AG04449 (cell line): ENCODE measurements at regions of chr17 and their contacts with region 1.

Region 1: DNA sequence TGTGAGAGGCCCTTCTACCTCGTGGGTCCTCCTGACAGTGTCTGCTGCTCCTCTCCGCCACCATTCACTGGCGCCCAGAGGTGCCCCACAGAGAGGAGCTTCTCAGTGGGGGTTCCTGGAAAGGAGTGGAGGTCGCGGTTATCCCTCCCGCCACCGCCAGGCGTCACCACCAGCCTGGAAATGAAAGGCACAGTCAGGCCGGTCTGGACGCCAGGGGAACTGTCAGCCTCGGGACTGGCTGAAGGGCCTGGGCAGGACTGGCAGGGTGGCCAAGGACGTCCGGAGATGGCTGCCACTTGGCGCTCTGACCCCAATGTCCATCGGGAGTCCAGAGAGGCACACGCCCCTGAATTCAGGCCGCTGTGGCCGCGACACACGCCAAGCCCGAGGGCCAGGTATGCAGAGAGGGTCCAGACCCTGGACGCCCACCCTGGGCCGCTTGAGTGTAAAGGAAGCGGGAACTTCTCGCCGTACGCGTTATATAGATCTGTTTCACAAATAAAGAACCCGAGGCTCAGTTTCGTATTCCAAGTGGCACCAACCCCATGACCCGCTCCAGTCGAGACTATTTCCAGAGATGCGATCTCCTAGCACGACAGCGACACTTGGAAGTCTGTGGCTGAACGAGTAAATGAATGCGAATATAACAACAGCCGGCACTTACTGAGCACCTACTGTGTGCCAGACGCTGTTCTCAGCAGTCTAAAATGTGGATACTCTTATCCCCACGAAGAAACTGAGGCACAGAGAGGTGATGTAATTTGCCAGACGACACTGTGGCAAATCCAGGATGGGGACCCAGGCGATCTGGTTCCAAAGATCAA is 7.6 kb upstream of the NXPH3 start:
- DNase-seq: no peak
- H3K4me3 ChIP-seq: peak overlapping the region; percentile 54
- CTCF ChIP-seq: peak; percentile 96

Region 2: GRCh38 chr17:49585422-49586027 is 17.4 kb after region 1 on chr17:
- CTCF ChIA-PET with region 1: interaction called, 50 read pairs
- POLR2A ChIA-PET with region 1: no interaction called
- DNase-seq: no peak
- H3K4me3 ChIP-seq: no peak overlapping the region
- CTCF ChIP-seq: no peak

Region 3: DNA sequence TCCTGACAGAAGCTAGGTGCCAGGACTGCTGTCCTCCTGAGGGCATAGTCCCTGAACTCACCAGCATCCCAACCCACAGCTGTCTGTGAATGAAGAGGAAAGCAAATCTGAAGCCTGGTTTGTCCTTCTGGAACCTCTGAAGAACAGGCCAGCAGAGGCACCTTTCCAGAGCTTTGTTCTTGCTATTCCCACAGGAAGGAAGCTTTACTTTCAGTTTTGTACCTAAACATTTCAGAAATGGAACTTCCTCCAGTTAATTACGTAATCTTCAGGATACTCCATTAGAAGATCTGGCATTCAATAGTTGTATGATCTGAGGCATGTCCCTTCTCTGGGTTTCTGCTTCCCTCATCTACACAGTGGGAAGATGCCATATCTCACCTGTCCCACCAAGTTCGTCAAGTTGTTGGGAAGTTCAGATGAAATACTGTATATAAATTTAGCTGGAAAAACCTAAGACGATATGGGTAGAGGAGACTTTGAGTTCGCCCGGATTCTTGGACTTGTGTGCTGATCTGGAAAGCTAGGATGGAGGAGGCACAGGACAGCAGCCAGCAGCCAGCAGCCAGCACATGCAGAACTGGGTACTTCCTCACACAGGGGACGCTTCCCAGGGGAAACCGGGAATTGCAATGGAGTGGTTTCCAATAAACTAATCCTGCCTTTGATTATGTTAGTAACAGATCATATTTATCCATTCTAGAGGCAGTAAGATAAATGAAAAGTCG is 30.0 kb after region 1 on chr17:
- CTCF ChIA-PET with region 1: interaction called, 13 read pairs
- POLR2A ChIA-PET with region 1: no interaction called
- DNase-seq: no peak
- H3K4me3 ChIP-seq: no peak overlapping the region
- CTCF ChIP-seq: no peak

Region 4: DNA sequence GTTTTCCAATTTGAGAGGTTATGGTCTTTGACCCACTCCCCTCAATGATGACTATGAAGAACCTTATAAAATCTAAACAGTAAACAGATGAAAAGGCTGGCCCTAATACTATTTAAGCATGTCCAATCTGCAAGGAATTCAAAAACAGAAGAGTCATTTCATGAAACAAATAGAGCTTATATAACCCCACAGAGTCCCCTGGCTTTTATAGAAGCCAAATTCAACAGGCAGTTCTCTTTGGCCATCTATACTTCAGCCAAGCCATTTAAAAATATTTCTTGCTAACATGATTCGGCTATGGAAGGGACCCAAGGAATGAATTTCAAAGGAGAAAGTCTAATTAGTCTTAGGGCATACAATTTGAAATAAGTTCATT is 66.4 kb after region 1 on chr17:
- CTCF ChIA-PET with region 1: interaction called, 12 read pairs
- POLR2A ChIA-PET with region 1: no interaction called
- DNase-seq: no peak
- H3K4me3 ChIP-seq: no peak overlapping the region
- CTCF ChIP-seq: no peak

Region 5: DNA sequence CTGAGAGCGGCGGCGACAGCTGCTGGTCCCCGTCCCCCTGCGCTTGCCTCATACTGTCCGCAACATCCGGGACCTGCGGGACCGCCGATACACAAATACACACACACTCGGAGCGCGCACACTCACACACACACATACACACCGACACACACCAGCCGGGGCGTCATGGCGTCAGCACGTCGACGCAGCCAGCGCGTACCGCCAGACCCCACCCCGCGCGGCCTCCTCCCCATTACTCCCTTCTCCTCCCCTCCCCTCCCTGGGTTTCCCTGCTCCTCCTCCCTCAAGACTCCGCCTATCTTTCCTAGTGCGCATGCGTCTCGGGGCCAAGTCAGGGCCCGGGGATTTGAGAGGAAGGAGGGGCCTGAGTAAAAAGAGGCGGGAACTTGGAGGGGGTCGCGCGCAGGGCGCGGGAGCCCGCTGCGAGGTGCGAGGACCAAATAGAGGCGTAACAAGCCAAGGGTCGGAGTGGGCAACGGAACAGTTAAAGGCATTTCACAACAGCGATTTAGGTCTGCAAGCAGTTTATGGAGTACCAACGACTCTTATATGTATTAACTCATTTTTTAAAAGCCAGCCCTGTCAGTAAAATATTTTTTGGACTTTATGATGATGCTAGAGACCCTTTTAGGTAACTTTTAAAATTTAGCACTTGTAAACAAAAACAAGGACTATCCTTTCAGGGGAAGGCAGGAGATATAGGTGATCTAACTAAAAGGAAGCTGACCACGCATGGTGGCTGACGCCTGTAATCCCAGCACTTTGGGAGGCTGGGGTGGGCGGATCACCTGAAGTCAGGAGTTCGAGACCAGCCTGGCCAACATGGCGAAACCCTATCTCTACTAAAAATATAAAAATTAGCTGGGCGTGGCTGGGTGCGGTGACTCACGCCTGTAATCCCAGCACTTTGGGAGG is 110.1 kb after region 1 on chr17 and contains the start of gene SPOP:
- CTCF ChIA-PET with region 1: interaction called, 59 read pairs
- POLR2A ChIA-PET with region 1: no interaction called
- DNase-seq: peak; percentile 98
- H3K4me3 ChIP-seq: peak within 1 kb of the TSS; percentile 78
- CTCF ChIP-seq: no peak

Region 6: DNA sequence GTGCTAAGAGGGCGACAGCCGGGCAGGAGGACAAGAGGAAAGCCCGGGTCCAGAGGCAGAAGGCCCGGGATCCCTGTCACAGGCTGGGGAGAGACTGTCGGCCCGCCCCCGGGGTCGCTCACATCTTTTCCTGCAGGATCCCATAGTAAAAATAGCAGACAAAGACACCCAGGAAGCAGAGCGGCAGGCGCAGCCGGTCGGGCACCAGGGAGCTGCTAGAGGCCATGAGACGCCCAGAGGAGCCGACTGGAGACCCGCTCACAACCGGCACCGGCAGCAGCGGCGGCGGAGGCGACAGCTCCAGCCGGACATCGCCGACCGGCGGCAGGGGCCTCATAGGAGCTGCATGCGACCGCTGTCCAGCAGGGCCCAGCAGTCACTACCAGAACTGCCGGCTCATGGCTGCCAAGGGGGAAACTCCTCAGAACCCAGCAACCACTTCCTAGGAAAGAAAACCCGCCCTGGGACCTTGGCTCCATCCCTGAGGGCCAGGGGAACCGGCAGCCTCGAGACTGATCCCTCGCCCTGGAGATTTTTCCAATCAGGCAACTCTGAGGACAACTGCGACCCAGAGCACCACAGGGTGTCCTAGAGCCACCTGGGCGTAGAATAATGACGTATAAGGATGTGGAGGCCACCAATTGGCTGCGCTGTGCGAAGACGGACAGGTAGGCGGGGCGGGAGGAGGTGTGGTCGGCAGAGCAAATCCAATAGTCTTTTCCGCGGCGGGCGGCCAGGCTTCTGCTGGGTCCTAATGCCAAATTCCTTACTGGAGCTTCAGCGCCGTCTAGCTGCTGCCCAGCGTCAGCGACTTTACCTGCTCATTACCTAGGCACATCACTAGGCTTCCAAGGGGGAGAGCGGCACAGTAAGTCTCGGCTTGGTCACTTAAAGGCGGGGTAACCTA is 139.8 kb after region 1 on chr17 and contains the start of gene SLC35B1:
- CTCF ChIA-PET with region 1: interaction called, 1,118 read pairs
- POLR2A ChIA-PET with region 1: no interaction called
- DNase-seq: peak; percentile 93
- H3K4me3 ChIP-seq: peak within 1 kb of the TSS; percentile 91
- CTCF ChIP-seq: peak; percentile 89

Region 7: GRCh38 chr17:49779739-49780231 is 211.7 kb after region 1 on chr17:
- CTCF ChIA-PET with region 1: interaction called, 10 read pairs
- POLR2A ChIA-PET with region 1: no interaction called
- DNase-seq: peak; percentile 62
- H3K4me3 ChIP-seq: no peak overlapping the region
- CTCF ChIP-seq: peak; percentile 62

Region 8: GRCh38 chr17:49822829-49823228 is 254.7 kb after region 1 on chr17:
- CTCF ChIA-PET with region 1: no interaction called
- POLR2A ChIA-PET with region 1: no interaction called
- DNase-seq: no peak
- H3K4me3 ChIP-seq: no peak overlapping the region
- CTCF ChIP-seq: no peak